B cell (primary cell): ENCODE measurements at regions of chr5 and their contacts with region 1.

Region 1: DNA sequence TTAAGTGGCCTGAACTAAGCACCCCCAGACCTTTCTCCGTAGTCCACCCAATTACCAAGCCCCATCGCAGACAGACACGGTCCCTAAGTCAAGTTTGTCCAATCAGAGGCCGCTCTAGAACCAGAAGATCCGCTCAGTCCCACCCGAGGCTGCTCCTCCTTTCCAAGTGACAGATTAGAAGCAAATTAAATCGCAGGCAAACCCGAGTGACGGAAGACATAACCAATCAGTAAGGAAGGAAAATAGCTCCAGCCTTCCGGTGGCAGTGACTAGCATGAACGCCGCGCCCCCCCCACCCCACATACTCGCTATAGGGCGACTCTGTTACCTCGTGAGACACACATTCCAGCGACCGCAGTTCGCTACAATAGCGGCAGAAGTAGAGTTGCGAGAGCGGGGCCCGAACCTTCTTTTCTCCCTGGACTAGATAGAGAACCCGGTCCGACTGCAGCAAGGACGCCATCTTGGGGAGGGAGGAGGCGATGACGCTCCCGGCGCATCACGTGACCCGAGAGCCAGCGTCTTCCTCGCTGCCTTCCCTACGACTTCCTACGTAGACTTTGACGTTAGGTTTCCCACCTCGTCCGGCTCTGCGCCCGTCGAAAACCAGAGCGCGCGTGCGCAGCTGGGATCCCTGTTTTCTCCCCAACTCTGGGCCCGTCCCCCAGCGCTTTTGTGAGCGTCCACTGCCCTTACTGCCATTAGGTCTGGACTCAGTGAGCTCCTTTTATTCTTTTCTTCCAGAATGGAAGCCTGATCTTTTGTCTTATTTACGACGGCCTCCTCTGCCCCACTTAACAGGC is at the start of gene DCTN4:
- DNase-seq: peak; percentile 98
- ATAC-seq: peak; percentile 91
- H3K4me3 ChIP-seq: peak within 1 kb of the TSS; percentile 81 to 95 (median 85)
- H3K4me3 Mint-ChIP-seq: no peak within 1 kb of the TSS
- H3K27ac ChIP-seq: peak within 1 kb of the TSS; percentile 91 to 93
- H3K27ac Mint-ChIP-seq: no peak within 1 kb of the TSS
- H3K4me1 ChIP-seq: peaks cover 15 to 20% of the 10 kb centered on the region in 2 donors
- H3K4me1 Mint-ChIP-seq: peaks cover 23% of the 10 kb centered on the region
- H3K27me3 ChIP-seq: peaks cover 0 to 6% (median 3%) of the 10 kb centered on the region in 4 experiments
- H3K27me3 Mint-ChIP-seq: peaks cover 3% of the 10 kb centered on the region
- CTCF ChIP-seq: no peak
- total RNA-seq, gene DCTN4: 54.4 and 58.4 TPM in 2 replicates

Region 2: DNA sequence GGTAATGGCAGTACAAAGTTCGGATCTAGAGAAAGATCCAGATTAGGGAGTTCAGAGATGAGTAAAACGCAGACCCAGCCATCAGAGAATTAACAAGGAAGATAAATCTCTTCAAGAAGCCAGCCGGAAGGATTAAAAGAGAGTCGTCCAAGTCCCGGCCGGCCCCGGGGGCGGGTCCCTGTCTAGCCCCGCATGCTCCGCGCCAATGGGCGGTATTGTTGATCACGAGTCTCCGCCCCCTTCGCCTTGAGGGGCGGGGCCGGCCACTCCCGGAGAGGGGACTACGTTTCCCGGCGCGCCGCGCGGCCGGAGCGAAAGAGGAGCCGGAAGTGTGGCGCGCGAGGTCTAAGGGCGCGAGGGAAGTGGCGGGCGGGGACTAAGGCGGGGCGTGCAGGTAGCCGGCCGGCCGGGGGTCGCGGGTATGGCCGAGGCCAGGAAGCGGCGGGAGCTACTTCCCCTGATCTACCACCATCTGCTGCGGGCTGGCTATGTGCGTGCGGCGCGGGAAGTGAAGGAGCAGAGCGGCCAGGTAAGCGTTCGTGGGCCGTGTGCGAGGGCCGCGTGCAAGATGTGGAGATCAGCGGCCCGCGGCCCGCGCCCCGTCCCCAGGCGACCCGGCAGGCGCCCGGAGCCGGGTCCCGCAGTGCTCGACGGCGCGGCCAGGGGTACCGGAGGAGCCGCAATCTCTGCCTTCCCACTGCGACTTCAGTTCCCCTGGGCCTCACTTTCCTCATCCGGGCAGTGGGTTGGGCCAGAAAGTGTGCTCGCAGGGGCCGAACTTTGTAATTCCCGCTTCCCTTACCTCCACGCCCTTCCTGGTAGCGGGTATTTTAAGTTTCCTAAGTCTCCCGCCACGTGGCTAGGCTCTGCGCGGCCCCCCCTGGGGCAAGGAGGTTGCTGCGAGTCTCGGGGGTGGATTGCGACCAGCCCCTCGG is 401.1 kb before region 1 on chr5 and contains the start of gene TCOF1:
- CTCF ChIA-PET with region 1: no interaction called
- POLR2A ChIA-PET with region 1: no interaction called
- intact Hi-C with region 1: loop called (anchors 1 kb)
- DNase-seq: peak; percentile 97
- ATAC-seq: peak; percentile 99
- H3K4me3 ChIP-seq: peak within 1 kb of the TSS; percentile 53 to 77 (median 69)
- H3K4me3 Mint-ChIP-seq: peak within 1 kb of the TSS; percentile 90
- H3K27ac ChIP-seq: peak within 1 kb of the TSS; percentile 23 to 68
- H3K27ac Mint-ChIP-seq: peak within 1 kb of the TSS; percentile 88
- H3K4me1 ChIP-seq: peaks cover 35 to 54% of the 10 kb centered on the region in 2 donors
- H3K4me1 Mint-ChIP-seq: peaks cover 50% of the 10 kb centered on the region
- H3K27me3 ChIP-seq: no peaks in the 10 kb centered on the region
- H3K27me3 Mint-ChIP-seq: no peaks in the 10 kb centered on the region
- CTCF ChIP-seq: no peak
- total RNA-seq, gene TCOF1: 62.4 and 66.5 TPM in 2 replicates

Region 3: GRCh38 chr5:150624334-150625163 is 134.2 kb before region 1 on chr5:
- CTCF ChIA-PET with region 1: no interaction called
- POLR2A ChIA-PET with region 1: no interaction called
- intact Hi-C with region 1: loop called (anchors 1 kb)
- DNase-seq: peak; percentile 54
- ATAC-seq: peak; percentile 34
- H3K4me3 ChIP-seq: peak overlapping the region; percentile 46 to 83 (median 75)
- H3K4me3 Mint-ChIP-seq: peak overlapping the region; percentile 93
- H3K27ac ChIP-seq: peak overlapping the region in 1 of 2 donors; percentile 41
- H3K27ac Mint-ChIP-seq: peak overlapping the region; percentile 78
- H3K4me1 ChIP-seq: peaks cover 45 to 48% of the 10 kb centered on the region in 2 donors
- H3K4me1 Mint-ChIP-seq: peaks cover 55% of the 10 kb centered on the region
- H3K27me3 ChIP-seq: no peaks in the 10 kb centered on the region
- H3K27me3 Mint-ChIP-seq: no peaks in the 10 kb centered on the region
- CTCF ChIP-seq: no peak

Region 4: DNA sequence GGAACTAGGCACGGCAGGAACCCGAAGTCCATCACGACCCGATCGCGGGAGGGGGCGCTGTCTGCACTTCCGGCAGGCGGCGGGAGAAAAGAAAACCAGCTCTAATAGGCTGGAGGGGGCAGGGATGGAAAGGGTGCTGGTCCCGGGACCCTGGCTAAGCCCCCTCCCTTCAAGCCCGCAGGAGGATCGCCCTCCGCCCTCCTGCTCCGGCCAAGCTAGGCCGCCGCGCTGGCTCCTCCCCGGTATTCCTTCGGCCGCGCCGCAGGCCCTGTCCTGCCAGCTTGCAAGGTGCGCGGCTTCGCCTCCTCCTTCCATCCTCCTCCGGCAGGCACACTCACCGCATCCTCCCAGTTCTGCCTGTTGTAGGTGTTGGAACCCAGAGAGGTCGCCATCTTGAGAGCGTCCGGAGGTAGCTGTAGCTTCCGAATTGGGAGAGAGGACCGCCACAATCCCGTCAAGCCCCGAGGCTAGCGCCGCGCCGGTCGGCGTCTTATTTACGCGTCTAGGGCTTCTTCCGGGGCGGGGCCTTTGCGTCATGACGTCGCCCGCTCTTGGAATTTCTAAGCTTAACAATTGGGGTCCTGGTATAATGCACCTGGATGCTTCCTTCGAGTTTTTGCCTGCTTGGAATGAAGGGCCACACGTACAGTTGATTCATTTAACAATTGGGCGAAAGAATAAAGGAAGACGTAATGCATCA is 58.0 kb before region 1 on chr5 and contains the start of gene RBM22:
- CTCF ChIA-PET with region 1: interaction called, 15 read pairs
- POLR2A ChIA-PET with region 1: interaction called, 11 read pairs
- intact Hi-C with region 1: loop called (anchors 1 kb)
- DNase-seq: peak; percentile 94
- ATAC-seq: peak; percentile 96
- H3K4me3 ChIP-seq: peak within 1 kb of the TSS; percentile 65 to 100 (median 99)
- H3K4me3 Mint-ChIP-seq: no peak within 1 kb of the TSS
- H3K27ac ChIP-seq: peak within 1 kb of the TSS; percentile 96 to 97
- H3K27ac Mint-ChIP-seq: no peak within 1 kb of the TSS
- H3K4me1 ChIP-seq: peaks cover 15 to 17% of the 10 kb centered on the region in 2 donors
- H3K4me1 Mint-ChIP-seq: peaks cover 8% of the 10 kb centered on the region
- H3K27me3 ChIP-seq: no peaks in the 10 kb centered on the region
- H3K27me3 Mint-ChIP-seq: no peaks in the 10 kb centered on the region
- CTCF ChIP-seq: peak; percentile 84
- total RNA-seq, gene RBM22: 88.4 and 89.4 TPM in 2 replicates

Region 5: DNA sequence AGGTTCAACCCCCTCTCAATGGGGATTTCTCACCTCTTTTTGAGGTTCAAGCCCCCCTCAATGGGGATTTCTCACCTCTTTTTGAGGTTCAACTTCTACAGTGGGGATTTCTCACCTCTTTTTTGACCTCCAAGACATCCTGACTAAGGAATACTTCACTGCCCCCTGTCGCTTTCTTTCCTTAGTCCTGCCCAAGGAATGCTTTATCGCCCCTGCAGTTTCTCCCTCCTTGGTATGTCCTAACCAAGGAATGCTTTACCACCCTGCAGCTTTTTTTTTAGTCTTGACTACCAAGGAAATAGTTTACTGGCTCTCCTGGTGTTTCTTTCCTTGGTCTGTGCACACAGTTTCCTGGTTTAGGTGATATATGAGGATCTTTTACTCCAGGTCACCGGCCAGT is 78.0 kb after region 1 on chr5:
- CTCF ChIA-PET with region 1: no interaction called
- POLR2A ChIA-PET with region 1: no interaction called
- intact Hi-C with region 1: no loop called
- DNase-seq: no peak
- ATAC-seq: no peak
- H3K4me3 ChIP-seq: no peak overlapping the region
- H3K4me3 Mint-ChIP-seq: no peak overlapping the region
- H3K27ac ChIP-seq: no peak overlapping the region
- H3K27ac Mint-ChIP-seq: no peak overlapping the region
- H3K4me1 ChIP-seq: no peaks in the 10 kb centered on the region
- H3K4me1 Mint-ChIP-seq: no peaks in the 10 kb centered on the region
- H3K27me3 ChIP-seq: peaks cover 0 to 11% (median 5%) of the 10 kb centered on the region in 4 experiments
- H3K27me3 Mint-ChIP-seq: peaks cover 31% of the 10 kb centered on the region
- CTCF ChIP-seq: no peak

Region 6: DNA sequence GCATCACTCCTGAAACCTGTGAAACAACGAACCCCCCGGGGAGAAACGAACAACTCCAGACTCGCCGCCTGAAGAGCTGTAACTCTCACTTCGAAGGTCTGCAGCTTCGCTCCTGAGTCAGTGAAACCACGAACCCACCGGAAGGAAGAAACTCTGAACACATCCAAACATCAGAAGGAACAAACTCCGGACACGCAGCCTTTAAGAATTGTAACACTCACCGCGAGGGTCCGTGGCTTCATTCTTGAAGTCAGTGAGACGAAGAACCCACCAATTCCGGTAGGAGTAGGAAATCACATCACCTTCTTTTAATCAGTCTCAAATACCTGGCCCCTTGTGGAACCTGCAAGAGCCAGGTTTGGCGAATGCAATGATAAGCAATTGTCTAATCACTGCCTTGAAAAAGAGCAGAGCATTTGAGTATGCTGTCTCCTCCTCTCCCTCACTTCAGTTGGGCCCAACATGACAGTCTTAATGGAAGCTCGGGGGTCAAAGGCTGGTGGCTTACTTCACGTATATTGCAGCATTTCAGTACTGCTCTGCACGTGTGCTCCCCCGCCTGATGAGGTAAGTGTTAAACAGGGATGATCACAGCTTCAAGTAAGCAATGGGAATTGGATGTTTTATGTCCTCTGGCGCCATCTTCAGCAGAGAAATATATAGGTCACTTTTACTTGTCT is 88.1 kb after region 1 on chr5:
- CTCF ChIA-PET with region 1: interaction called, 6 read pairs
- POLR2A ChIA-PET with region 1: no interaction called
- intact Hi-C with region 1: loop called (anchors 2 kb)
- DNase-seq: peak; percentile 84
- ATAC-seq: peak; percentile 97
- H3K4me3 ChIP-seq: peak overlapping the region; percentile 31 to 58 (median 45)
- H3K4me3 Mint-ChIP-seq: peak overlapping the region; percentile 84
- H3K27ac ChIP-seq: no peak overlapping the region
- H3K27ac Mint-ChIP-seq: peak overlapping the region; percentile 54
- H3K4me1 ChIP-seq: peaks cover 4 to 11% of the 10 kb centered on the region in 2 donors
- H3K4me1 Mint-ChIP-seq: peaks cover 8% of the 10 kb centered on the region
- H3K27me3 ChIP-seq: no peaks in the 10 kb centered on the region
- H3K27me3 Mint-ChIP-seq: peaks cover 4% of the 10 kb centered on the region
- CTCF ChIP-seq: peak; percentile 79

Region 7: GRCh38 chr5:150904479-150905318 is 146.0 kb after region 1 on chr5 and contains the start of gene ZNF300:
- CTCF ChIA-PET with region 1: no interaction called
- POLR2A ChIA-PET with region 1: no interaction called
- intact Hi-C with region 1: no loop called
- DNase-seq: peak; percentile 78
- ATAC-seq: peak; percentile 96
- H3K4me3 ChIP-seq: peak within 1 kb of the TSS in 4 of 5 experiments; percentile 43 to 63 (median 54)
- H3K4me3 Mint-ChIP-seq: peak within 1 kb of the TSS; percentile 94
- H3K27ac ChIP-seq: peak within 1 kb of the TSS; percentile 37 to 48
- H3K27ac Mint-ChIP-seq: peak within 1 kb of the TSS; percentile 97
- H3K4me1 ChIP-seq: no peaks in the 10 kb centered on the region
- H3K4me1 Mint-ChIP-seq: peaks cover 12% of the 10 kb centered on the region
- H3K27me3 ChIP-seq: peaks cover 0 to 4% (median 0%) of the 10 kb centered on the region in 4 experiments
- H3K27me3 Mint-ChIP-seq: peaks cover 21% of the 10 kb centered on the region
- CTCF ChIP-seq: no peak
- total RNA-seq, gene ZNF300: 8.1 and 8.7 TPM in 2 replicates

Region 8: DNA sequence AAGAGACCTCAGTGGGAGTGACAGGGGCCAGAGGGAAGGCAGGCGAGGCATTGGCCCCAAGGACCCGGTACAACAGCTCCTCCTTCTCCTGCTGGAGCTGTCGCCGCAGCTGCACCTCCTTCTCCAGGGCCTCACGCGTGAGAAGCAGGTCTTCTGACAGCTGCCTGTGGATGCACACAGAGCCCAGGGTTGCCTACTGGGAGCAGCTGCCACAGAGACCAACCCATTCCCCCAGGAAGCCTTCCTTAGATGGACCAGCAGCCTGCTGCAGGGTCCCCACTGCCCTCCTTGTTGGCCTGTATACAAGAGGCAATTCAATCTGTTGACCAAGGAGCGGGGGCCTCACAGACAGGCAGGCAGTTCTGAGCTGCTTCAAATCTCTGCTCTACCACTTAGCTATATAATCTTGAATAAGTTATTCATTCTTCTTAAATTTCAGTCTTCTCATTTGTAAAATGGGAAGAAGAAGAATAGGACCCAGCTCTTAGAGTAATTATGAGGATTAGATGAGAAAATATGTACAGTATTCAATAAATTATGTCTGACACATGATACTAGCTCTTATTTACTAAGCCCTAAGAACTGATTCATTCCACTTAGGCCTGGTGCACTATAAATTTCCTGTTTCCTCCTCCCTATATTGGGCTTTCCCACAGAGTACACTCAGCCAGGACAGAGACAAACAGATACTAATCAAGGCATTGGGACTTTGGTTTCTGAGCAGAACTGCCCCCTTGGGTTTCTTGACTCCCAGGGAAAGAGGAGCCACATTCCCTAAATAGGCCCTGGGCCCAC is 424.9 kb after region 1 on chr5:
- CTCF ChIA-PET with region 1: no interaction called
- POLR2A ChIA-PET with region 1: no interaction called
- intact Hi-C with region 1: no loop called
- DNase-seq: no peak
- ATAC-seq: no peak
- H3K4me3 ChIP-seq: no peak overlapping the region
- H3K4me3 Mint-ChIP-seq: no peak overlapping the region
- H3K27ac ChIP-seq: peak overlapping the region in 1 of 2 donors; percentile 20
- H3K27ac Mint-ChIP-seq: no peak overlapping the region
- H3K4me1 ChIP-seq: peaks cover 12 to 15% of the 10 kb centered on the region in 2 donors
- H3K4me1 Mint-ChIP-seq: peaks cover 38% of the 10 kb centered on the region
- H3K27me3 ChIP-seq: no peaks in the 10 kb centered on the region
- H3K27me3 Mint-ChIP-seq: no peaks in the 10 kb centered on the region
- CTCF ChIP-seq: no peak